Prostate gland (tissue), 2 donors: ENCODE measurements at regions of chr5 and their contacts with region 1.

Region 1: GRCh38 chr5:68287976-68288706 is 72.6 kb downstream of the PIK3R1 start:
- DNase-seq: peak; percentile 70
- H3K4me3 ChIP-seq: peak overlapping the region; percentile 38 to 42
- H3K27ac ChIP-seq: peak overlapping the region; percentile 79 to 85
- H3K4me1 ChIP-seq: peaks cover 12% of the 10 kb centered on the region
- H3K27me3 ChIP-seq: no peaks in the 10 kb centered on the region
- CTCF ChIP-seq: no peak
- POLR2A ChIP-seq: no peak

Region 2: DNA sequence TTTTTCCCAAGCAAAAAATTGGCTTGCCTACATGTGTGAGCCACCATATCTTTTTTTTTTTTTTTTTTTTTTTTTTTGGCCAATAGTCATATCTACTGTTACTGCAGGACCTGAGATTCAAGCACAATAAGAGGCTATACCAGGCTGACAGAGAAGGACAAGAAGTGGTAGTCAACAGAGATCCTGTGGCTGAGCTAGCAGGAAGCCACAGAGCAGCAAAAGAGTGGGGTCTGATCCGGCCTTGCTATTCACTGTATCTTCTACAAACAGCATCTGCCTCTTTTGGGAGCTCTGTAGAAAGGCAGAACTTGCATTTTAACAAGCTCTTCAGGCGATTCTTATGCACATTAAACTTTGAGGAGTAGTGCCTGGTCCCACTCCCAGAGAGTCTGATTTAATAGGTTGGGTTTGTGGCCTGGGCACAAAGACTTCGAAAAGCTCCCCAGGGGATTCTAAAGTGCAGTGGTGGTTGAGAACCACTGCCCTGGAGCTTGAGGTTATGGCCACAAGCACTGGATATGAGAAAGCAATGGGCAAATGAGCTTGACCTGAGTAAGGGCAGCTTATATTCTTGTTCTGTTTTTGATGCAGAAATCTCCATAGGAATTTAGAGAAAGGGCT is 90.2 kb after region 1 on chr5:
- intact Hi-C with region 1: loop called (anchors 2 kb)
- DNase-seq: no peak
- H3K4me3 ChIP-seq: no peak overlapping the region
- H3K27ac ChIP-seq: peak overlapping the region in 1 of 2 donors; percentile 3
- H3K4me1 ChIP-seq: no peaks in the 10 kb centered on the region
- H3K27me3 ChIP-seq: no peaks in the 10 kb centered on the region
- CTCF ChIP-seq: no peak
- POLR2A ChIP-seq: no peak

Region 3: DNA sequence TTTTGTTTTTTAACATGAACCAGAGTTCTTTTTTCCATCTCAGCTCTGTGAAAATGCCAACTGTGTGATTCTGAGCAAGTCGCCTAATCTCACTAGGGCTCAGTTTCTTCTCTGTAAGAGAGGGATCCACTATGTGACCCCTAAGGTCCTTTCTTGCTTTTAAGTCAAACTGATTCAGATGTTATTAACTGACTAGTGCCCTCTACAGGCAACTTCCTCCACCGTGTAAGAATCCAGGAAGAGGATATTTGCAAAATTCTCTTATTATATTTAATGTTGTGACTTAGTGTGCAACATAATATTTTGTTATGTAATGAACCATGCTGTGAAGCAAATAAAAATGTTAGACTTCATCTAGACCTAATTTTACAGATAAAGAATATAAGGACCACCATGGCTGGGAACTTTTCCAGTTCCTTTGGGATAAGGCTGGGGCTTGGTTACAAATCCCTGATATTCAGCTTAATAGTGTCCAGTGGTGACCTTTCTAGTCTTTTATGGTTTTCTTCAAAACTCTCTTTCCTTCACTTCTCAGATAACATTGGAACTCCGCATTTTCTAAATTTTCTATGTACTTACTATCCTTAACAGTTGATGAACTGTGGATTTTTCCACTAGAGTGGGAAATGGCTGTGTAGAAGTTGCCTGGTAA is 172.1 kb after region 1 on chr5:
- intact Hi-C with region 1: loop called (anchors 5 kb)
- DNase-seq: peak; percentile 7
- H3K4me3 ChIP-seq: no peak overlapping the region
- H3K27ac ChIP-seq: no peak overlapping the region
- H3K4me1 ChIP-seq: no peaks in the 10 kb centered on the region
- H3K27me3 ChIP-seq: no peaks in the 10 kb centered on the region
- CTCF ChIP-seq: peak; percentile 44 to 54 (median 46)
- POLR2A ChIP-seq: no peak

Region 4: DNA sequence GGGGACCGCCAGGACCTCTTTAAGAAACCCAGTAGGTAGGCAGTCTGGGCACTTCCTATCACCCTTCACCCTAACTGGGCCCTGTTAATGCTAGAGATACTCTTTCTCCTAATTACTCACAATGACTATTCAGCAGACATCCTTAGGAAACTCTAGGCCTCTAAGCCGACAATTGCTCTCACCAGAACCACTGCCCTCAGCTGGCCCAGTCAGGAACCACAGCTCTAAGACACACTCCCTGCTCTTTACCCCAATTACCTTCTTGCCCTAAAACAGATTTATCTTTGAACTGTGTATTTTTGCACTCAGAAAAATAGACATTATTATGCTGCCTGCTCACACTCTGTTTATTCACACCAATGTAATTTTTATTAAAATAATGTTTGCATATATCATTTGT is 373.1 kb after region 1 on chr5:
- intact Hi-C with region 1: loop called (anchors 10 kb)
- DNase-seq: no peak
- H3K4me3 ChIP-seq: no peak overlapping the region
- H3K27ac ChIP-seq: no peak overlapping the region
- H3K4me1 ChIP-seq: no peaks in the 10 kb centered on the region
- H3K27me3 ChIP-seq: no peaks in the 10 kb centered on the region
- CTCF ChIP-seq: peak in 2 of 4 experiments; percentile 32 to 37
- POLR2A ChIP-seq: no peak

Region 5: DNA sequence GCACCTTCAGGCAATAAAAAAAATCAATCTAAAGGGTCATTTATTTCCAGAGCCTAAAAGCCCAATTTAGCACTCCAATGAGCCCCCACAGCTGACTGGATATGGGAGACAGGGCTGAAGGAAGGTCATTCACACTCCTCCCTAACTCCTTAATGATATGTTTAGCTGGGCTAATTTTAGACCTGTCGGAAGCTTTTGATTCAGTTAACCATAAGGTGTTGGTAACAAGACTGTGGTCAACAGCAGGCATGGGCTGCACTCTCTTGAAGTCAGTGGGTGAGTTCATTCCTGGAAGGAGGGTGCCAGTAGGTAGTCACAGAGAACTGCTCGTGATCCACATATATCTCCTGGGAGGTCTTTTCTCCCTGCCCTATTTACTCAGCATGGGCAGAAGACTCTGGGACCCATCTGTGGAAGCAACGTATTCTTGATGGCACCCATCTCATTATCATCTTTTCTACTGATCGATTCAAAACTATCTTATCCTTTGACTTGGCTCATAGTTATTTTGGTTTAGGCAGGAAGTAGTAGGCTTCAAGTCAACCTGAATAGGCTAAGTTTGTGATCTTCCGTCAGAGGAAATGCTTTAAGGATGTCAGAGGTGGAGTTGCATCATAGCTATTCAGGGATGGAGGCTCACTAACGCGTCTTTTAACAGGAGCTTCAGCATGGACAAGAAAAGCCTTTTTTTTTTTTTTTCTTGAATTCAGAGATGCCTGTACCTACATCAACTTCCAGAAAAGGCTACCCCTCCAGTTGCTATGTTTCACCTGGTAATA is 438.0 kb after region 1 on chr5:
- intact Hi-C with region 1: loop called (anchors 10 kb)
- DNase-seq: no peak
- H3K4me3 ChIP-seq: no peak overlapping the region
- H3K27ac ChIP-seq: no peak overlapping the region
- H3K4me1 ChIP-seq: no peaks in the 10 kb centered on the region
- H3K27me3 ChIP-seq: no peaks in the 10 kb centered on the region
- CTCF ChIP-seq: no peak
- POLR2A ChIP-seq: no peak

Region 6: GRCh38 chr5:68962757-68963484 is 674.8 kb after region 1 on chr5:
- intact Hi-C with region 1: loop called (anchors 2 kb)
- DNase-seq: peak; percentile 68
- H3K4me3 ChIP-seq: no peak overlapping the region
- H3K27ac ChIP-seq: peak overlapping the region; percentile 12 to 57
- H3K4me1 ChIP-seq: no peaks in the 10 kb centered on the region
- H3K27me3 ChIP-seq: no peaks in the 10 kb centered on the region
- CTCF ChIP-seq: peak; percentile 77 to 90 (median 86)
- POLR2A ChIP-seq: no peak

Region 7: GRCh38 chr5:69007726-69008368 is 719.7 kb after region 1 on chr5:
- intact Hi-C with region 1: loop called (anchors 5 kb)
- DNase-seq: peak; percentile 56
- H3K4me3 ChIP-seq: no peak overlapping the region
- H3K27ac ChIP-seq: no peak overlapping the region
- H3K4me1 ChIP-seq: no peaks in the 10 kb centered on the region
- H3K27me3 ChIP-seq: no peaks in the 10 kb centered on the region
- CTCF ChIP-seq: peak in 3 of 4 experiments; percentile 69 to 81 (median 80)
- POLR2A ChIP-seq: no peak